ENCODE measurements at regions of chr22 and their contacts with region 1.

Region 1: GRCh38 chr22:41091132-41092022 is 1.0 kb upstream of the EP300 start:
- DNase-seq: peak; percentile 99
- ATAC-seq: peak; percentile 81
- H3K4me3 Mint-ChIP-seq: peak overlapping the region; percentile 96
- H3K27ac Mint-ChIP-seq: peak overlapping the region; percentile 100
- H3K4me1 Mint-ChIP-seq: peaks cover 20% of the 10 kb centered on the region
- H3K27me3 Mint-ChIP-seq: no peaks in the 10 kb centered on the region

Region 2: DNA sequence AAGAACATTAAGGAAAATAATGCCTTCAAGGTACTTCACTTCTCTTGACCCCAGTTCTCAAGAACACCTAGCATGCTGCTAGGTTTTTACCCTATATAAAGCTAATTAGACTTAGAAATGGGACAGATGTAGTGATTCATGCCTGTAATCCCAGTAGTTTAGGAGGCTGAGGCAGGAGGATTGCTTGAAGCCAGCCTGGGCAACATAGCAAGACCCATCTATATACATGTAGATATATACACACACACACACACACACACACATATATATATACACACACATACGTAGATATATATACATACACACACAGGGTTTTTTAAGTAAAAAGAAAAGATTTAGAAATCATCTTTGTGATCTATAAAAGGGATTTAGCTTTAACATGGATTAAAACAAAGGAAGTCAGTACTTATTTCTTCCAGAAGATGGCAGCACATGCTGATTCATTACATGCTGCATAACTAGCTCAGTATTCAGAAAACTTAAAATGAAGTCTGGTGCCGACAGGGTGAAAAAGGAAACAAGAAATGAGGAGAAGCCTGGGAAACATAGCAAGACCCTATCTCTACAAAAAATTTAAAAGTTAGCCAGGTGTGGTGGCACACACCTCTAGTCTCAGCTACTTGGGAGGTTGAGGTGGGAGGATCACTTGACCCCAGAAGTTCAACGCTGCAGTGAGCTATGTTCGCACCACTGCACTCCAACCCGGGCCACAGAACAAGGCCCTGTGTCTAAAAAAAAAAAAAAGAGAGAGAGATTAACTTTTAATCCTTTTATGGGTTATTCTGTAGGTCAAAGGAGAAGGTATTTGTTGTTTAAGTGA is 168.7 kb before region 1 on chr22:
- POLR2A ChIA-PET with region 1: interaction called, 12 read pairs
- DNase-seq: no peak
- ATAC-seq: peak; percentile 81
- H3K4me3 Mint-ChIP-seq: peak overlapping the region; percentile 47
- H3K27ac Mint-ChIP-seq: peak overlapping the region; percentile 43
- H3K4me1 Mint-ChIP-seq: peaks cover 4% of the 10 kb centered on the region
- H3K27me3 Mint-ChIP-seq: no peaks in the 10 kb centered on the region

Region 3: GRCh38 chr22:41022470-41023298 is 68.7 kb before region 1 on chr22:
- POLR2A ChIA-PET with region 1: interaction called, 49 read pairs
- DNase-seq: peak; percentile 87
- ATAC-seq: peak; percentile 68
- H3K4me3 Mint-ChIP-seq: peak overlapping the region; percentile 82
- H3K27ac Mint-ChIP-seq: peak overlapping the region; percentile 79
- H3K4me1 Mint-ChIP-seq: peaks cover 11% of the 10 kb centered on the region
- H3K27me3 Mint-ChIP-seq: peaks cover 15% of the 10 kb centered on the region

Region 4: DNA sequence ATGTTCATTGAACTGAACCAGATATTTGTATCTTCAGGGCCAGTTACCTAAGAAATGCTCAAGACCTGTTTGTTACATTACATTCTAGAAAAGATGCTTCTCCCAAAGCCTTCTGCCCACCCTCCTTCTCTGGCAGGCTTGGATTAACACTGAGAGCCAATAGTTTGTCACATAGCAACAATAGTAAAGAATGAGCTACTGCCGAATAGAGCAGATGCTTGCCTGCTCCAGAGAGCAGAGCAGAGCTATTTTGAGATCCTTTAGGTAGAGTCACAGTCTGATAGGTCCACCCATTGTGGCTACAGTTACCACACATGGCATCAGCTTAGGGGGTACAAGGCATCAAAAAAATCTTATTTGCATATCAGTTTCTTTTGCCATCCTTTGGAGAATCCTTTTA is 12.4 kb before region 1 on chr22:
- POLR2A ChIA-PET with region 1: no interaction called
- DNase-seq: no peak
- ATAC-seq: no peak
- H3K4me3 Mint-ChIP-seq: no peak overlapping the region
- H3K27ac Mint-ChIP-seq: no peak overlapping the region
- H3K4me1 Mint-ChIP-seq: no peaks in the 10 kb centered on the region
- H3K27me3 Mint-ChIP-seq: no peaks in the 10 kb centered on the region

Measured in activated naive CD8-positive, alpha-beta T cell treated with anti-CD3 and anti-CD28 coated beads, Interleukin-2, amount 10 ng/mL, durations not matched to agents 7 days and 5 days (primary cell).